ENCODE measurements at regions of chr1 and their contacts with region 1.

Region 1: DNA sequence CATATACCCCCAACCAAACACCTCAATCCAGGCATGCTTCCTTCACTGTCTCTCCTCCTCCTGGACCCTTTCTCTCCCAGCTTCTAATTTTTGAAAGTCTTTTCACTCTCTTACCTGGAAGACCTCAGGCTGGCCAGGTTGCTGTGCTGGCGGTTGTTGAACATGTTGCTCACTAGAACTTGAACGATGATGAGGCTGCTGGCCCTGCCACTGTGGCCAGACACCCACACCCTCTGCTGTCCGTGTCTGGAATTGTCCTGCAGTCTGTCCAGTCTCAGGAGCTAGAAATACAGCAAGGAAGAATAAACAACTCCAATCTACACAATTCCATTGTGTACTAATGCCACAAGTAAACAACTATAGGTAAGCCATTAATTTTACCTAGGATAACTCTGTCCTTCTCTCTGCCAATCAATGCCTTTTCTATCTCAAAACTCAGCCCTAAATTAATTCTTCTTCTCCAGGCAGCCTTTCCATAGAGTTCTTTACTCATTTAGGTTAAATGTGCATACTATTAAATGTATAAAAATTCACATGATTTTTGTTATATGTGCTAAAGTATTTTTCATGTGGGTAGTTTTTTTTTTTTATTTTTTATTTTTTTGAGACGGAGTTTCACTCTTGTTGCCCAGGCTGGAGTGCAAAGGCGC is 5.1 kb upstream of the CTSK start:
- H3K4me3 Mint-ChIP-seq: no peak overlapping the region
- H3K27ac Mint-ChIP-seq: no peak overlapping the region
- H3K4me1 Mint-ChIP-seq: peaks cover 15% of the 10 kb centered on the region
- H3K27me3 Mint-ChIP-seq: no peaks in the 10 kb centered on the region

Region 2: GRCh38 chr1:150621497-150622302 is 191.5 kb before region 1 on chr1:
- intact Hi-C with region 1: no loop called
- H3K4me3 Mint-ChIP-seq: peak overlapping the region; percentile 32
- H3K27ac Mint-ChIP-seq: peak overlapping the region; percentile 62
- H3K4me1 Mint-ChIP-seq: peaks cover 70% of the 10 kb centered on the region
- H3K27me3 Mint-ChIP-seq: no peaks in the 10 kb centered on the region

Region 3: DNA sequence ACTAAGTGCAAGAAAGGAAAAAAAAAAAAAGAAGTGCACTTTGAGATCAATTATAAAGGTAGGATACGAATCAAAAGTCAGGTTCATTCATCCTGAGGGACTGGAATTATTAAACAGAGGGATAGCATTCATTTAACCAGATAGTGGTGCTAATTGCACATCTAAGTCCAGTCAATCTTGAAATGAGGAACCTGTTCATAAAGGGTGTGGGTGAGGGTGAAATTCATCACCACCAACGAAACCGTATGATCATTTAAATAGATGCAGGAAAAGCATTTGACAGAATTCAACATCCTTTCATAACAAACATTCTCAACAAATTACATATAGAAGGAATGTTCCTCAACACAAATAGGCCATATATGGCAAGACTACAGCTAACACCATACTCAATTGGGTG is 53.2 kb before region 1 on chr1:
- intact Hi-C with region 1: loop called (anchors 1 kb)
- H3K4me3 Mint-ChIP-seq: peak overlapping the region; percentile 72
- H3K27ac Mint-ChIP-seq: peak overlapping the region; percentile 76
- H3K4me1 Mint-ChIP-seq: peaks cover 48% of the 10 kb centered on the region
- H3K27me3 Mint-ChIP-seq: no peaks in the 10 kb centered on the region

Region 4: DNA sequence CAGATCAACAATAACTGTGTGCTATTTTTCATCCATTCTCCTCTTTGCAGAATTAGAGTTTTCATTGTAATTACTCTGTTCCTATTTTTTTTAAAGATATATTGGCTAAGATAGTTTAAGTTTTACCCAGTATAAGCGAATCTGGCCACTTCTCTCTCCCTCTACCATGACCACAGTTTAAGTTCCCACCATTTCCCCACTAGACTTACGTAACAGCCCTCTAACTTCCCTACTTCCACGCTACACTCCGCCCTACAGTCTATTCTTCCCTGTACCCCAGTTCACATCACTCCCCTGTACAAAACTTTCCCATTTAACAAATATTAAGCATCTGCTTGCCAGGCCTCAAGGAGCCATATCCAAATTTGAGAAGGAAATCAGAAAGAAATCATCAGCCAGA is 21.6 kb before region 1 on chr1:
- intact Hi-C with region 1: loop called (anchors 2 kb)
- H3K4me3 Mint-ChIP-seq: peak overlapping the region; percentile 45
- H3K27ac Mint-ChIP-seq: peak overlapping the region; percentile 80
- H3K4me1 Mint-ChIP-seq: peaks cover 78% of the 10 kb centered on the region
- H3K27me3 Mint-ChIP-seq: no peaks in the 10 kb centered on the region

Measured in dendritic cell treated with granulocyte-macrophage colony-stimulating factor and Interleukin-4, amounts not matched to agents 40 ng/mL and 50 ng/mL, for 4 days (primary cell).